AG04450 (cell line): ENCODE measurements at regions of chr2 and their contacts with region 1.

Region 1: GRCh38 chr2:12716282-12717190 is at the start of gene TRIB2:
- DNase-seq: peak; percentile 65
- H3K4me3 ChIP-seq: peak within 1 kb of the TSS; percentile 87
- H3K27ac ChIP-seq: peak within 1 kb of the TSS; percentile 89
- H3K27me3 ChIP-seq: no peaks in the 10 kb centered on the region
- CTCF ChIP-seq: no peak
- polyA plus RNA-seq, gene TRIB2: 12.2 and 13.0 TPM in 2 replicates

Region 2: GRCh38 chr2:11829947-11830707 is 886.4 kb before region 1 on chr2:
- CTCF ChIA-PET with region 1: interaction called, 12 read pairs
- POLR2A ChIA-PET with region 1: no interaction called
- DNase-seq: peak; percentile 89
- H3K4me3 ChIP-seq: peak overlapping the region; percentile 47
- H3K27ac ChIP-seq: peak overlapping the region; percentile 90
- H3K27me3 ChIP-seq: no peaks in the 10 kb centered on the region
- CTCF ChIP-seq: peak; percentile 39; the same call in 1 of the 2 replicates

Region 3: DNA sequence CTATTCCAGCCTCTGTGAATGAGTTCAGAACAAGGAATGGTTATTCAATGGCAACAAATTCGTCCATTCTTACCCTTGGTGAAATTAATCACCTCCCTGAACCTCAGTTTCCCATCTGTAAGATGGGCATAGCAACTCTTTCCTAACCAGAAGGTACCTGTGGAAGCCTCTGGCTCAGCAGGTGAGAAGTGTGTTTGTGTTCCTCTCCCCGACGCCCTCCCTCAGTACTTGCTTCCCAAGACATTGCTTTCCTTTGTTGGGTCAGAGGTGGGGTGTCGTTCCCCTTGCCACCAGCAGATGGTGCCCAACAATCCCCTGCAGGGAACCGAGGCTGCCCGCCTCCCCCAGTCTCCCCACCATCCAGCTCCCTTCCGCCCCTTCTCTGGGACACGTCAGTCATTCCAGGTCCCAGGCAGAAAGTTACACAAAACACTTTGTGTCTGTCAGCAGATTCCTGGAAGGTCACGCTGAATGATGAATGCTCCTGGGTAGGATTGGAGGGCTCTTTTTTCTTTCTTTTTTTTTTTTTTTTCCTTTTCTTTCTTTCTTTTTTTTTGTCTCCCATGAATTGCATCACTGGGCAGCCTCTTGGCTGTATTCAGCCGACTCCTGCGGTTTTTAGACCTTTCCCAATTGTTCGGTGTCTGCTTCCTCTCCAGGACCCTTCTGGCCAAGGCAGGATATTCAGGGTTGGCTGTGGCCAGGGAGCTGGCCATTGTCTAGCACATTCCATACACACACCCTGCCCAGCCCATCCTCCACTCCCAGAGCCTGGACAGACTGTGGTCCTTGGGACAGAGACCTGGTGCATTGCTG is 852.8 kb before region 1 on chr2:
- CTCF ChIA-PET with region 1: interaction called, 10 read pairs
- POLR2A ChIA-PET with region 1: no interaction called
- DNase-seq: peak; percentile 67
- H3K4me3 ChIP-seq: peak overlapping the region; percentile 48
- H3K27ac ChIP-seq: no peak overlapping the region
- H3K27me3 ChIP-seq: no peaks in the 10 kb centered on the region
- CTCF ChIP-seq: peak; percentile 98

Region 4: DNA sequence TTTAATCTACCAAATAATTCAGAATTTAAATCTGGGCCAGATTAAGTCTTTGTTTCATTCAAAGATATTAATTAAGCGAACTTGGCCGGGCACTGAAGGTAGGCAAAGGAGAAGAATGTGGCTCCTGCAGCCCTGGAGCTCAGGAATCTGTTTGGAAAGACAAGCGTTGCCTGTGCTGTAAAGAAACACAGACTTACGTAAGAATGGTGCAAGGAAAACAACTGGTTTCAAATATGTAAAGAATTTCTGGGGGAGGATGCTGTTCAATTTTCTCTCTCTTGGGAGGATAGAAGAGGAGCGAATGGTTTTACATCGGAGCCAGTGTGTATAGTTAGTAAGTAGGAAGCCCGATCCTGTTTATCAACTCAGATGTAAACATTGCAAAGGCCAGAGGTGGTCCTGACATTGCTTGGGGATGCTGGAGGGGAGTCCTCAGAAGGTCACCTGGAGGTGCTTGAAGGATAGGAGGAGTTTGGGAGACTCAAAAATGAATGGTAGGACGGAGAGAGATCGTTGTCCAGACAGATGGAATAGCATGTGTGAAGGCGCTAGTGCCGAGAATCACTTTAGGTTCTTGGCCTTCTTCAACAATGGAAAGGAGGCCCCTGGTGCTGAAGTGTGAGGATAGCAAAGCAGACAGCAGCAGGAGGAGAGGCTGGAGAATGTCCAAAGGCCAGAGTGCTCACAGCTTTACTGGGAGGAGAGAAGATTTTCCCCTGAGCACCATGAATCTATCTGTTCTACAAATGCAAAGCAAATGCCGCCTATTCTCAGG is 514.0 kb before region 1 on chr2:
- CTCF ChIA-PET with region 1: interaction called, 17 read pairs
- POLR2A ChIA-PET with region 1: interaction called, 3 read pairs
- DNase-seq: peak; percentile 16
- H3K4me3 ChIP-seq: no peak overlapping the region
- H3K27ac ChIP-seq: no peak overlapping the region
- H3K27me3 ChIP-seq: no peaks in the 10 kb centered on the region
- CTCF ChIP-seq: peak; percentile 30

Region 5: DNA sequence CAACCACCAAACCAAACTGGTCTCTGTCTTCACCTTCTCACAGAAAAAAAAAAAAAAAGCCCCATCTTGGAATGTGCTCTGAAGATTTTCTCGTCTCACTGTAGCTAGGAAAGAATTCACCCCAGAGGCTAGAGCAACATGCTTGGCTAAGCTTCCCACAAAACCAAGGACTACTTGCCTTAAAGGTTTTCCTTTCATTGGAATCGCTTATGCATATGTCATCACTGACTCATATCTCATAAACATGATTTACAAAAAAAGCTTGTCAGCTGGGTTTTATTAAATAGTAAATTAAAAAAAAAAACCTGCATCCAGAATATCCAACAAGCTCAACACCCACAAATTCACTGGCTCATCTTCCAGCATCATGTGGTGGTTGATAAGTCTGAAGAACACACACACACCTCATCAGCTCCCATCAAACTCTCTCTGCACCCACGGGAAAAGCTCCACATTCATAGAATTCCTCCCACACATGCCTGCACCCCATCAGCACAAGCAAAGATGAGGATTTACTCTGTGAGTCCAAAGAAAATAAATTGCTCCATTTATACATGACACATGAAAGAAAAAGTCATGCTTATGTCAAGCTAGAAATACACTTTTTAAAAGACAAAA is 181.8 kb before region 1 on chr2:
- CTCF ChIA-PET with region 1: no interaction called
- POLR2A ChIA-PET with region 1: interaction called, 15 read pairs
- DNase-seq: peak; percentile 87
- H3K4me3 ChIP-seq: no peak overlapping the region; the same call in 1 of the 2 replicates
- H3K27ac ChIP-seq: peak overlapping the region; percentile 90
- H3K27me3 ChIP-seq: no peaks in the 10 kb centered on the region
- CTCF ChIP-seq: no peak

Region 6: GRCh38 chr2:12702305-12703121 is 14.0 kb before region 1 on chr2:
- CTCF ChIA-PET with region 1: interaction called, 26 read pairs
- POLR2A ChIA-PET with region 1: interaction called, 8 read pairs
- DNase-seq: no peak
- H3K4me3 ChIP-seq: no peak overlapping the region
- H3K27ac ChIP-seq: peak overlapping the region; percentile 80
- H3K27me3 ChIP-seq: no peaks in the 10 kb centered on the region
- CTCF ChIP-seq: no peak

Region 7: DNA sequence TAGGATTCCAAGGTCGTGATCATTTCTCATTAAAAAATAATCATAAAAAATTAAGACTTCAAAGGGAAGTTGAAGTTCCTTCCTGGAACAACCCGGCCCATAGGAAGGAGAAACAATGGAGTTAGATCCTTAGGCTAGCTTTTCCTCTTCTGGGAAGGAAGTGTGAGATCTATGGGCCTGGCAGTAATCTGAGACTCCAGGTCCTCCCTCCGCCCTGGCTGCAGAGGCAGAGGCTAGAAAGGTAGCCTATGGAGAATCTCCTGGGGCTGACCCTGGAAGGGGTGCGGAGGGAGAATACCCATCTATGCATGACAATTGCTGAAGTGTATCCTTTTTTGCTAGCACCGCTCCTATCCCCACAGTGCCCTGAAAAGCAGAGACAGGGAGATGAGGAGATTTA is 38.1 kb after region 1 on chr2:
- CTCF ChIA-PET with region 1: no interaction called
- POLR2A ChIA-PET with region 1: no interaction called
- DNase-seq: no peak
- H3K4me3 ChIP-seq: no peak overlapping the region
- H3K27ac ChIP-seq: no peak overlapping the region
- H3K27me3 ChIP-seq: no peaks in the 10 kb centered on the region
- CTCF ChIP-seq: no peak

Region 8: DNA sequence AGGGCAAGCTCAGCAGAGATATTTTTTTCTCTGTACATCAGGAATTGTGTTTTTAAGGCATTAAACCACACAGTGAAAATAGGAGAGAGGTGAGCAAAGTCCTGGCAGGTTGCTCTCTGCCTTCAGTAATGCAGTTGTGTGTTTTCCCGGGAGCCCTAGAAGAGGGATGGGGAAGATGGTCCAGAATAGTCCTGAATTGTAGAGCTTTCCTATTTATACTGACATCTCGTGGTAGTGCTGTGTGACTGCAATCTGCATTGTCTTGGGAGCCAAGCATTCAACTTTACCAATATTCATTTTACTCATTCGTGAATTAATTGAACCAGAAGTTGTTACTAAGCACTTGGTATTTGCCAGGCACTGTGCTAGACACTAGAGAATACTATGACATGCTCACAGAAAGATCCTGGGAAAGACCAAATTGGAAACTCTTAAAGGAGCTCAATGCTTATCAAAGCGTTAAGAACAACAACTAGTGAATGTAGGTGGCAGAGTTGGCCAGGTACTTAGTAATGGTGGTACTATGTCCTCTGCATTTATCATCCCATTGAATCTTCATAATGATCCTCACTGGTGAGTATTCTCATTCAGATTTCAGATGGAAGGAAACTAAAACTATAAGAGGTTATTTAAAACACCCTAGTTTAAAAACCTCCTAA is 214.8 kb after region 1 on chr2:
- CTCF ChIA-PET with region 1: interaction called, 31 read pairs
- POLR2A ChIA-PET with region 1: interaction called, 4 read pairs
- DNase-seq: peak; percentile 30
- H3K4me3 ChIP-seq: no peak overlapping the region
- H3K27ac ChIP-seq: no peak overlapping the region
- H3K27me3 ChIP-seq: no peaks in the 10 kb centered on the region
- CTCF ChIP-seq: peak; percentile 94